ENCODE measurements at regions of chr4 and their contacts with region 1.

Region 1: DNA sequence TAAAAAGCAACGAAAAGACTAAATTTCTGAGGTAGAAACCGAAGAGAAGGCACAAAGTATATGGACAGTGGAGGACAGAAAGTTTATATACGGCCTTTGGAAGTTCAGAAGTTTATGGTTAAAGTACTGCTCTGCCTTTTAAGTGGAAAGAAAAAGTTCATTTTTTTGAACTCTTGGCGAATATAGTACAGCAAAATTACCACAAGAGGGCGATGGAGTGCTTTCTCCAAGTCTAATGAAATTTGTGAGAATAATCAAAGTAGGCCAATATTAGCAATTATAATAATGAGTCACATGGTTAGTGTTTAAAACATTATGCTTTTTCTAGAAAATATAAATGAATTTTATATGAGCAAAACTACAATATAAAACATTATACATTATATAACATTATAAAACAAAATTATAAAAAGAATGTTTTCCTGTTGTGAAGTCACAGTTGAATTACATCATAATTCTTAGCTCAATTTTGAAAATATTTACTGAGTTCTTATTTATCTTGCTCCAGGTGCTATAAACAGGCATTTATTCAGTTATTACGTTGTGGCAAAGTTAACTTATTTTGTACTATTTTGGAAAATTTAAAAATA is 136.2 kb upstream of the BMPR1B start:
- DNase-seq: no peak
- H3K4me3 ChIP-seq: no peak overlapping the region
- H3K27me3 ChIP-seq: no peaks in the 10 kb centered on the region
- CTCF ChIP-seq: peak; percentile 72

Region 2: DNA sequence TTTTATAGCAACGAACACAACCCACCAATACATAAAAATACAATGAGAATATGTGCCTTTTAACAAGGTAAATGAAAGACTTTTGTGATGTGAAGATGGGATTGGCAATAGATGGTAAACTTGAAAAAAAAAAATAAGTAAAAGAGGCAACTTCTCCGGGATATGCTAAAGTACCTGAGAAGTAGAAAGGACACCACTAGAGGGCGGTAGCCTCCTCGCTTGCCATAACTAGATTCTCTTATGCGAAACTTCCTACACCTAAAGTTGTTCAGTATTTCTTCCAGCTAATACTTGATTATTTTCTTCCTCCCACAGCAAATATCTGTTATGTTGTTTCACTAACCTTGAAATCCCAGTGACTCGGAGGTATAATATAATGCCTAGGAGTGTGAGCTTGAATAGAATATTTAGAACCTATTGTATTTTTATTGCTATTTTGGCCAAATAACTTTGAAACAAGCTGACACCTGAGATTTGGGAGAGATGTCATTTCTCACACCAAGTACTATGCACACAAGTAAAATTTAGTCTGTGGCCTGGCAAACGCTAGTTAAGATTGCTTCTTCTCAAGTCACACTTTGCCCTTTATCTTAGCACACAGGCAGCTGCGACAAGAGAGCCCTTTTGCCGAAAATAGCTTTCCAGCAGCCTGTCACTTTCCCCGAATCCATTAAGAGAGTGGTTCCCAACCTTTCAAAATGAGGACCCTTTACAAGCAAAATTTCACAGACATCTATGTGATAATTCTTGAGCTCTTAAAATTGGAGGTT is 214.7 kb before region 1 on chr4:
- CTCF ChIA-PET with region 1: interaction called, 12 read pairs
- POLR2A ChIA-PET with region 1: no interaction called
- DNase-seq: peak; percentile 26
- H3K4me3 ChIP-seq: no peak overlapping the region
- H3K27me3 ChIP-seq: no peaks in the 10 kb centered on the region
- CTCF ChIP-seq: peak; percentile 88

Region 3: GRCh38 chr4:94690851-94691254 is 69.3 kb after region 1 on chr4:
- CTCF ChIA-PET with region 1: no interaction called
- POLR2A ChIA-PET with region 1: no interaction called
- DNase-seq: no peak
- H3K4me3 ChIP-seq: no peak overlapping the region
- H3K27me3 ChIP-seq: no peaks in the 10 kb centered on the region
- CTCF ChIP-seq: no peak

Region 4: GRCh38 chr4:94728056-94728766 is 106.6 kb after region 1 on chr4:
- CTCF ChIA-PET with region 1: interaction called, 90 read pairs
- POLR2A ChIA-PET with region 1: no interaction called
- DNase-seq: no peak
- H3K4me3 ChIP-seq: no peak overlapping the region
- H3K27me3 ChIP-seq: no peaks in the 10 kb centered on the region; the same call in 1 of the 2 replicates
- CTCF ChIP-seq: no peak

Region 5: GRCh38 chr4:94741304-94741703 is 119.7 kb after region 1 on chr4:
- CTCF ChIA-PET with region 1: interaction called, 10 read pairs
- POLR2A ChIA-PET with region 1: no interaction called
- DNase-seq: no peak
- H3K4me3 ChIP-seq: no peak overlapping the region
- H3K27me3 ChIP-seq: peaks cover 2% of the 10 kb centered on the region
- CTCF ChIP-seq: no peak

Region 6: DNA sequence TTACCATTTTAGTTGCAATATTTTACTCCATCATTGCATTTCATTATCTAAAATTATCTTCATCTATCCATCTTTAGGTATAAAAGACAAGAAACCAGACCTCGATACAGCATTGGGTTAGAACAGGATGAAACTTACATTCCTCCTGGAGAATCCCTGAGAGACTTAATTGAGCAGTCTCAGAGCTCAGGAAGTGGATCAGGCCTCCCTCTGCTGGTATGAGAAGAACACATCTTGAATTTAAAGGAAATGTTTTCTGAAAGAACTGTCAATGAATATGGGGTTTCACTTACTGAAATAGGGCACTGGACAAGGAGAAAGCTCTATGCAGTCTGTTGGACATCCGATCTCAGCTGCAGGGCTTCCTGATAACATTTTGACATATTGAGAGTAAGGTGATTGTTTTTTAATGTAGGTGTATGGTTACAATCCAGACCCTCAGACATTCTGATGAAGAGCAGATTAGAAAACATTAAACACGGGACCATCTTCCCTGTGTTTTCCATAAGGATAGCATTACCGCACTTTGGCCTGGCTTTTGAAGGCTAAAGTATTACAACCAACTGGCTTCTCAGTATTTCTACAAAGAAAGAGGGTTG is 503.4 kb after region 1 on chr4:
- CTCF ChIA-PET with region 1: interaction called, 10 read pairs
- POLR2A ChIA-PET with region 1: no interaction called
- DNase-seq: no peak
- H3K4me3 ChIP-seq: no peak overlapping the region
- H3K27me3 ChIP-seq: no peaks in the 10 kb centered on the region
- CTCF ChIP-seq: peak; percentile 65